ENCODE measurements at regions of chr14 and their contacts with region 1.

Region 1: GRCh38 chr14:90697577-90698206 is 118.5 kb downstream of the TTC7B start:
- DNase-seq: peak; percentile 85
- H3K4me3 Mint-ChIP-seq: no peak overlapping the region
- H3K27ac Mint-ChIP-seq: no peak overlapping the region
- H3K4me1 Mint-ChIP-seq: no peaks in the 10 kb centered on the region
- H3K27me3 Mint-ChIP-seq: no peaks in the 10 kb centered on the region
- CTCF ChIP-seq: peak; percentile 76

Region 2: DNA sequence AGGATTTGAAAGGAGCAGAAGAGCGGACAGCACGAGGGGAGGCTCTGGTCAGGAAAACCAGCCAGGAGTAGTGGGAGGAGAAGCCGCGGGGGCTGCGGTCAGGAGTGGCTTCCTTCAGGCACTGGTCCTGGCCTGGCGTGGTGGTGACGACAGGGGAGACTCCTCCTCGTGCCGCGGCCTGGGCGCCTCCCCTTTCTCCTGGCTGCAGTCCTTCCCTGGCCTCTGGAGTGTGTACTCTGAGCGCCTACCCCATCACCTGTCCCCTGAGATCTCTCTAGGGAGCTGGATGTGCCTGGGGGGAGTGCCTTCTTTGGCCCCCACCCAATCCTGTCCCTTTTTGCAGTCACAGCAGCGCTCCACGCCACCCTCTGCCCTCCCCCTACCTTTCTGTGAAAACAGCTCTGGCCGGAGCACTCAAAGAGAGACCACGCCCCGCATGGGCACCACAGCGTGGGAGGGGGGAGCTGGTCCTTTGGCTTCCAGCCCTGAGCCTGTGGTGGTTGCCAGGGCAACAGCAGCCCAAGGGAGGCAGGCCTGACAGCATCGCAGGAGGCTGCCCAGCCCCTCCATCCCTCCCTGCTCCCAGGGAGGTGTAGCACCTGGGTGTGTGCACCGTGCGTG is 175.0 kb before region 1 on chr14:
- CTCF ChIA-PET with region 1: no interaction called
- intact Hi-C with region 1: loop called (anchors 5 kb)
- DNase-seq: peak; percentile 31
- H3K4me3 Mint-ChIP-seq: no peak overlapping the region
- H3K27ac Mint-ChIP-seq: peak overlapping the region; percentile 23
- H3K4me1 Mint-ChIP-seq: peaks cover 19% of the 10 kb centered on the region
- H3K27me3 Mint-ChIP-seq: no peaks in the 10 kb centered on the region
- CTCF ChIP-seq: no peak

Region 3: GRCh38 chr14:90677484-90678050 is 20.1 kb before region 1 on chr14:
- CTCF ChIA-PET with region 1: no interaction called
- intact Hi-C with region 1: no loop called
- DNase-seq: no peak
- H3K4me3 Mint-ChIP-seq: no peak overlapping the region
- H3K27ac Mint-ChIP-seq: no peak overlapping the region
- H3K4me1 Mint-ChIP-seq: no peaks in the 10 kb centered on the region
- H3K27me3 Mint-ChIP-seq: no peaks in the 10 kb centered on the region
- CTCF ChIP-seq: no peak

Region 4: GRCh38 chr14:91303091-91303923 is 605.6 kb after region 1 on chr14:
- CTCF ChIA-PET with region 1: no interaction called
- intact Hi-C with region 1: no loop called
- DNase-seq: peak; percentile 29
- H3K4me3 Mint-ChIP-seq: no peak overlapping the region
- H3K27ac Mint-ChIP-seq: no peak overlapping the region
- H3K4me1 Mint-ChIP-seq: no peaks in the 10 kb centered on the region
- H3K27me3 Mint-ChIP-seq: no peaks in the 10 kb centered on the region
- CTCF ChIP-seq: no peak